Brain microvascular endothelial cell (primary cell): ENCODE measurements at regions of chr10 and their contacts with region 1.

Region 1: GRCh38 chr10:90871766-90872647 is at the start of gene RPP30:
- DNase-seq: peak; percentile 83
- H3K4me3 ChIP-seq: peak within 1 kb of the TSS; percentile 95
- H3K27ac ChIP-seq: peak within 1 kb of the TSS; percentile 42
- H3K27me3 ChIP-seq: no peaks in the 10 kb centered on the region
- CTCF ChIP-seq: no peak

Region 2: DNA sequence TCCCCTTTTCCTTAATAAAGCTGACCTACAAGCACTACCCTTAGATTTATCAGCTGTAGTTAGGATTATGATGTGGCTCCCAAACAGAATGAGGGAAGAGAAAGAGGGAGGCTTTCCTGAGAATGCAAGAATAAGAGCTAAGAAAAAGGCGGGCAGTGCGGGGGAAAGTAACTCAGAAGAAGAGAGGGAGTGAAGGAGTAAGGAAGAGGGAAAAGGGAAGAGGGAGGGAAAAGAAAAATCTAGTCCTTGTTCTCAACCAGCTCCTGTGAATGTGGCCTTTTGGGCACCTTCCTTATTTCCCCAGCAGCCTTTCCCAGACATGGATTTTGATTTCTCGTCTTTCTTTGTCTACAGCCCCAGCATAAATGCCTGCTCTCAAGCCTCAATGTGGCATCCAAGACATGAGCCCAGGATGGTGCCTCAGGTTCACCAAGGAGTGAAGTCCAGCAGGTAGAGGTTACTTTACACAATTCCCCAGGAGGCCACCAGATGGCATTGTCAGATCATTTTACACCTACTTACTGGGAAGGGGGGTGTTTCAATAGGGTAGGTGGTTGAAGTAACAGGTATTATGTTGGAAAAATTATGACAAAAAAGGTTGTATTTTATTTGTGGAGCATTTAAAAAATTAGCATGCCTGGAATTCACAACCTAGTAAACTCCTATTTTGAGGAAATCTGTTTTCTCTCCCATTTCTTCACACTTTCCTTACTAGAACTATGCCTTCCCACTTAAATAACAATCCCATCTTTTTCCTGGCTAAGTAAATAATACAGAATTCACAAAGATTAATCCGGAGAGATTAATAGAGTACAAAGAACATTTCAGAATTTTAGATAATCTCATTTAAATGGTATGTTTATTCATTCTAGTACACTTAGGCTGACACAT is 120.7 kb before region 1 on chr10:
- in situ Hi-C with region 1: loop called (anchors 25 kb)
- DNase-seq: peak; percentile 14
- H3K4me3 ChIP-seq: no peak overlapping the region
- H3K27ac ChIP-seq: no peak overlapping the region
- H3K27me3 ChIP-seq: no peaks in the 10 kb centered on the region
- CTCF ChIP-seq: peak; percentile 77